Calu3 (cell line): ENCODE measurements at regions of chr15 and their contacts with region 1.

Region 1: GRCh38 chr15:96893159-96893906 is 562.8 kb downstream of the NR2F2 start:
- DNase-seq: peak; percentile 61
- H3K4me3 Mint-ChIP-seq: peak overlapping the region; percentile 60
- H3K27ac Mint-ChIP-seq: peak overlapping the region; percentile 68
- H3K4me1 Mint-ChIP-seq: peaks cover 20% of the 10 kb centered on the region
- H3K27me3 Mint-ChIP-seq: no peaks in the 10 kb centered on the region
- CTCF ChIP-seq: peak; percentile 69

Region 2: DNA sequence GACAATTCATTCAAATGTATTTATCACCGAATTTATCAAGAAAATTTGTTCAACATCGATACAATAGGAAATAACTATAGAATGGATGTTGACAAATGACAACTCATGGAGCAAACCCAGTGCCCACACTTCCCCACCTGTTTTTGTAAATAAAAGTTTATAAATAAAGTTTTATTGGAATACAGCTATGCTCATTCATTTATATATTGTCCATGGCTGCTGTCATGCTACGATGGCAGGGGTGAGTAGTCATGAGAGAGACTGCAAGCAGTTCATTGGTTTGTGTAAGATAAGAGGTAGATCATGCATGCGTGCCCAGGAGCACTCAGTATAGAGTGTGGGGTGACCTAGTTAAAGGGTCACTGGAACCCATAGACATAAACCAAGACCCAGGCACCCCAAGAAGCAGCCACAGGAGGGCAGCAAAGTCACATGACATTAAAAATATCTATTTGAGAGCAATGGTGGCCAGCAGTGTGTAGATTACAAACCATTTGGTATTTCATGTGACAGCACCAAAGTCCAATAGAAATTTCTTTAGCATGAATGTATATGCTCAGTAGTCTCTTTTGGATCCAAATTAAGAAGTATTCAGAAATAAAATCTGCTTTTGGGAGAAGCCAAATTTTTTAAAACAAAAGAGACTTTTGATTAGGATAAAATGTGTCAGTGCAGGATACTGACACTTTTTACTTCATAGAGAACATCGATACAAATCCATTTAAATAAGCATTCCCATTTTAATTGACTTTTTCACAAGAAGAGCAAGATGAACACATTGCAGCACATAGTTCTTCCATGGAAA is 1867.2 kb before region 1 on chr15:
- CTCF ChIA-PET with region 1: interaction called, 3 read pairs
- intact Hi-C with region 1: loop called (anchors 2 kb)
- DNase-seq: peak; percentile 78
- H3K4me3 Mint-ChIP-seq: no peak overlapping the region
- H3K27ac Mint-ChIP-seq: no peak overlapping the region
- H3K4me1 Mint-ChIP-seq: peaks cover 7% of the 10 kb centered on the region
- H3K27me3 Mint-ChIP-seq: no peaks in the 10 kb centered on the region
- CTCF ChIP-seq: peak; percentile 75

Region 3: GRCh38 chr15:96170979-96171739 is 722.2 kb before region 1 on chr15:
- CTCF ChIA-PET with region 1: no interaction called
- intact Hi-C with region 1: loop called (anchors 5 kb)
- DNase-seq: peak; percentile 69
- H3K4me3 Mint-ChIP-seq: no peak overlapping the region
- H3K27ac Mint-ChIP-seq: no peak overlapping the region
- H3K4me1 Mint-ChIP-seq: peaks cover 19% of the 10 kb centered on the region
- H3K27me3 Mint-ChIP-seq: no peaks in the 10 kb centered on the region
- CTCF ChIP-seq: no peak

Region 4: GRCh38 chr15:96416934-96417759 is 476.2 kb before region 1 on chr15:
- CTCF ChIA-PET with region 1: no interaction called
- intact Hi-C with region 1: loop called (anchors 2 kb)
- DNase-seq: peak; percentile 53
- H3K4me3 Mint-ChIP-seq: peak overlapping the region; percentile 70
- H3K27ac Mint-ChIP-seq: peak overlapping the region; percentile 78
- H3K4me1 Mint-ChIP-seq: peaks cover 68% of the 10 kb centered on the region
- H3K27me3 Mint-ChIP-seq: no peaks in the 10 kb centered on the region
- CTCF ChIP-seq: no peak

Region 5: GRCh38 chr15:96593724-96594123 is 299.6 kb before region 1 on chr15:
- CTCF ChIA-PET with region 1: no interaction called
- intact Hi-C with region 1: loop called (anchors 2 kb)
- DNase-seq: peak; percentile 13
- H3K4me3 Mint-ChIP-seq: peak overlapping the region; percentile 66
- H3K27ac Mint-ChIP-seq: peak overlapping the region; percentile 40
- H3K4me1 Mint-ChIP-seq: peaks cover 14% of the 10 kb centered on the region
- H3K27me3 Mint-ChIP-seq: no peaks in the 10 kb centered on the region
- CTCF ChIP-seq: no peak

Region 6: DNA sequence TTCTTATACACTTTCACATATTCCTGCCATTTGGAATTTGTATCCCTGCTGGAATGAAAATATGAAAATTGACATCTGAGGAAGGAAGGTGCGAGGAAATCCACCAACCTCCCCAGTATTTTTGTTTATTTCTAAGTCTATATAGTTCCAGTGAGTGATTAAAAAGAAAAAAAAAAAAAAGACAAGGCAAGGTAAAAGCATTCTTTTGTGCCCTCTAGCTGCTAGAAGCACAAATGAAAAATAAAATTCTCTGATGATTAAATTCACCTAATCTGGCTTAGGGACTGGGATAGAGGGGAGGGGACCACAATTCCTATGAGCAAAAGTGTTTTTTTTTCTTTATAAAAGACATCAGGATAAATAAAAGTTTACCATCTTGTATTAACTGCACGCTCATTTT is 191.9 kb before region 1 on chr15:
- CTCF ChIA-PET with region 1: interaction called, 3 read pairs
- intact Hi-C with region 1: loop called (anchors 5 kb)
- DNase-seq: no peak
- H3K4me3 Mint-ChIP-seq: no peak overlapping the region
- H3K27ac Mint-ChIP-seq: no peak overlapping the region
- H3K4me1 Mint-ChIP-seq: peaks cover 29% of the 10 kb centered on the region
- H3K27me3 Mint-ChIP-seq: no peaks in the 10 kb centered on the region
- CTCF ChIP-seq: no peak

Region 7: DNA sequence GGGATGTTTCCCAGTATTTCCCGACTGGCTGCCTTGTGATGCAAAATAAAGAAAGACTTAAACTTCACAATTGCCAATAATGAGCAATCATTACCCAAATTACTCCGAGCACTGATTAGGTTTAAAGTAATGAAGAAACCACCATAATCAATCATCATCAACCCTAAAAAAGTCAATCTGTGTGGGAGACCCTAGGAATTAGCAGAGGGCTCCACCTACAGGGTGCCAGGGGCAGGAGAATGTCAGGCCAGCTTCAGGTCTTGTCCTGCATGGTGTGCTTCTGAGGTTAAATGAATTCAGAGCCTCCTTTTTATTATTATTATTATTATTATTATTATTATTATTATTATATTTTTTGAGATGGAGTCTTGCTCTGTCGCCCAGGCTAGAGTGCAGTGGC is 589.2 kb after region 1 on chr15:
- CTCF ChIA-PET with region 1: no interaction called
- intact Hi-C with region 1: no loop called
- DNase-seq: peak; percentile 41
- H3K4me3 Mint-ChIP-seq: no peak overlapping the region
- H3K27ac Mint-ChIP-seq: no peak overlapping the region
- H3K4me1 Mint-ChIP-seq: no peaks in the 10 kb centered on the region
- H3K27me3 Mint-ChIP-seq: no peaks in the 10 kb centered on the region
- CTCF ChIP-seq: no peak

Region 8: DNA sequence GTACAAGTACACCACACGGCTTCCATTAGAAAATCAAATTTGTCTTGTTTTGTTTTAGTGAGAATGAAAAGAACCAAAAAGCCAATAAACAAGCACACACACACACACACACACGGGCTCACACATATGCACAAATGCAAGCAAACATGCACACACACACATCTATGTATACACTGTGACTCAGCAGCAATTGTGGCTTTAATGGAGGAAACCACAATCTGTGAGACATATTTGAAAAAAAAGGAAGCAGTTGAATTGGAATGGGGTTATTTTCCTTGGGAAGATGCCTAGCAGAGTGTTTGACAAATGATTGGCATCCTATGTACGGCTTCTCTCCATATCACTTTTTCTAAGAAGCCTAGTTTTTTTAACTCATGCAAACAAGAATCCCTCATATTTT is 866.0 kb after region 1 on chr15:
- CTCF ChIA-PET with region 1: no interaction called
- intact Hi-C with region 1: loop called (anchors 1 kb)
- DNase-seq: no peak
- H3K4me3 Mint-ChIP-seq: no peak overlapping the region
- H3K27ac Mint-ChIP-seq: no peak overlapping the region
- H3K4me1 Mint-ChIP-seq: peaks cover 8% of the 10 kb centered on the region
- H3K27me3 Mint-ChIP-seq: no peaks in the 10 kb centered on the region
- CTCF ChIP-seq: no peak